Naive thymus-derived CD4-positive, alpha-beta T cell (primary cell): ENCODE measurements at regions of chr2 and their contacts with region 1.

Region 1: GRCh38 chr2:238362626-238363025 is 42.3 kb downstream of the TRAF3IP1 start:
- DNase-seq: no peak
- ATAC-seq: no peak
- H3K4me3 ChIP-seq: no peak overlapping the region
- H3K4me3 Mint-ChIP-seq: no peak overlapping the region
- H3K27ac ChIP-seq: no peak overlapping the region
- H3K27ac Mint-ChIP-seq: no peak overlapping the region
- H3K4me1 ChIP-seq: no peaks in the 10 kb centered on the region
- H3K4me1 Mint-ChIP-seq: peaks cover 0 to 26% (median 0%) of the 10 kb centered on the region in 7 donors
- H3K27me3 ChIP-seq: no peaks in the 10 kb centered on the region
- H3K27me3 Mint-ChIP-seq: no peaks in the 10 kb centered on the region

Region 2: DNA sequence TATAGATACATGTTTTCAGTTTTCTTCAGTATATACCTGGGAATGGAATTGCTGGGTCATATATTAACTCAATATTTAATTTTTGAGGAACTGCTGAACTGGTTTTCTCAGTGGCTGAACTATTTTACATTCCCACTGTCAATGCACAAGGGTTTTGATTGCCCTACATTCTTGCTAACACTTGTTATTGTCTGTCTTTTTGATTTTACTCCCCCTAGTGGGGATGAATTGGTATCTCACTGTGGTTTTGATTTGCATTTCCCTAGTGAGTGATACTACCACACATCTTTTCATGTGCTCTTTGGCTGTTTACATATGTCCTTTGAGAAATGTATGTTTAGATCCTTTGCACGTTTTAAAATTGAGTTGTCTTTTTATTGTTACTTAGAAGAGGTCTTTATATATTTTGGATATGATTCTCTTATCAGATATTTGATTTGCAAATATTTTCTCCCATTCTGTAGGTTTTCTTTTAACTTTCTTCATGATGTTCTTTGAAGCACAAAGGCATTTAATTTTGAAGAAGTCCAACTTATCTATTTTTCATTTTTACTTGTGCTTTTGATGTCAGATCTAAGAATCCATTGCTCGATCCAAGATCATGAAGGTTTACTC is 100.3 kb after region 1 on chr2:
- CTCF ChIA-PET with region 1: interaction called, 7 read pairs
- POLR2A ChIA-PET with region 1: no interaction called
- intact Hi-C with region 1: loop called (anchors 1 kb)
- DNase-seq: peak in 6 of 9 donors; percentile 16 to 67 (median 58)
- ATAC-seq: peak; percentile 76
- H3K4me3 ChIP-seq: no peak overlapping the region
- H3K4me3 Mint-ChIP-seq: no peak overlapping the region
- H3K27ac ChIP-seq: no peak overlapping the region
- H3K27ac Mint-ChIP-seq: no peak overlapping the region
- H3K4me1 ChIP-seq: no peaks in the 10 kb centered on the region
- H3K4me1 Mint-ChIP-seq: peaks cover 0 to 6% (median 0%) of the 10 kb centered on the region in 7 donors
- H3K27me3 ChIP-seq: no peaks in the 10 kb centered on the region
- H3K27me3 Mint-ChIP-seq: peaks cover 0 to 10% (median 0%) of the 10 kb centered on the region in 5 donors

Region 3: DNA sequence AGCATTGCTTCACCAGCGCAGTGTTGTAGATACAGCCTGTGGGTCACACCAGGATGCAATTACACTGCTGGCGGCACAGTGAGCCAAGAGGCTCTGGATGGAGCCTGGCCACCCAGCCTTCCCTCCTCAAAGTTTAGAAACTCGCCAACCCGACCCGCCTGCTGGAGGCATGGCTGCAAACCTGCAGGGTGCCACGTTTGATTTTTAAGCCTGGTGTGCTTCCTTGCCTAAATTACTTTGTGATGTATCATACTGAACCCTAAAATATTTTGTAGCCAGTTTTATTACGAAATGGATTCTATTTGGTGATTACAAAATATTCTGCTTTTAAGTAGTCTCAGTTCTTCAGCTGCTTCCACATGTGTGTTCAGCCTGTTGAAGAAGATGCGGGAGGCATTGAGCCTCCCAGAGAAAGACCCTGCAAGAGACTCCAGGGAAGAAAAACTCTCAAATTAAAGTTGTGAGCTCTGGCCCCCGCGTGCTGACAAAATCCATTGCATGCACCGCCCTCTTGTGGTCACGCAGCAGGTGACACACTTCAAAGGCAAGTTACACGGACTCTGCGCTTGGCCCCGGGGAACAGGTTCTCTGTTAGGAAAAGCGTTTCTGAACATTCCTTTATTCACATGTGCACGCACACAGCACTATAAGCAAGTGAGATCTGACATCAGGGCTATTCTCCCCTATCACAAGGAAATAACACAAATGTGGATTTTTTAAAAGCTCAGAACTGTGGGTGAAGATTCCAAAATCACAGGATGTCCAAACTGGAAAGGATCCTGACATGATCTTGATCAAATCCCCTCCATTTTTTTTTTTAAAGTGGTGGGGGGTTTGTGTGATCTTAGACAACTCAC is 422.3 kb after region 1 on chr2:
- CTCF ChIA-PET with region 1: no interaction called
- POLR2A ChIA-PET with region 1: no interaction called
- intact Hi-C with region 1: loop called in 1 of 2 experiments (anchors 1 kb)
- DNase-seq: peak in 7 of 9 donors; percentile 25 to 53 (median 38)
- ATAC-seq: peak; percentile 46
- H3K4me3 ChIP-seq: no peak overlapping the region
- H3K4me3 Mint-ChIP-seq: no peak overlapping the region
- H3K27ac ChIP-seq: no peak overlapping the region
- H3K27ac Mint-ChIP-seq: no peak overlapping the region
- H3K4me1 ChIP-seq: no peaks in the 10 kb centered on the region
- H3K4me1 Mint-ChIP-seq: peaks cover 0 to 2% (median 0%) of the 10 kb centered on the region in 7 donors
- H3K27me3 ChIP-seq: no peaks in the 10 kb centered on the region
- H3K27me3 Mint-ChIP-seq: peaks cover 6 to 31% (median 14%) of the 10 kb centered on the region in 5 donors